Heart right ventricle (tissue), 16 donors: ENCODE measurements at regions of chr18 and their contacts with region 1.

Region 1: GRCh38 chr18:55343396-55344073 is 244.5 kb downstream of the TCF4 start:
- DNase-seq: no peak
- ATAC-seq: peak in 5 of 8 donors; percentile 46 to 67 (median 57)
- H3K4me3 ChIP-seq: no peak overlapping the region
- H3K27ac ChIP-seq: peak overlapping the region in 1 of 10 donors; percentile 1
- H3K4me1 ChIP-seq: peaks cover 2 to 66% (median 24%) of the 10 kb centered on the region in 9 donors
- H3K27me3 ChIP-seq: no peaks in the 10 kb centered on the region
- CTCF ChIP-seq: peak; percentile 24 to 73 (median 61)

Region 2: GRCh38 chr18:55494899-55495298 is 151.4 kb after region 1 on chr18:
- intact Hi-C with region 1: loop called in 3 of 10 experiments (anchors 10 kb)
- DNase-seq: no peak
- ATAC-seq: no peak
- H3K4me3 ChIP-seq: no peak overlapping the region
- H3K27ac ChIP-seq: no peak overlapping the region
- H3K4me1 ChIP-seq: peaks cover under 1 to 54% (median 16%) of the 10 kb centered on the region in 9 donors
- H3K27me3 ChIP-seq: no peaks in the 10 kb centered on the region
- CTCF ChIP-seq: no peak